Activated T-helper 1 cell treated with anti-CD3 and anti-CD28 coated beads, Interleukin-12 subunit alpha, Interleukin-12 subunit beta, Interleukin-2, Interleukin-4 antibody, amounts not matched to agents 30 ng/mL and 10 ng/mL and 1 ng/mL, durations not matched to agents 14 hours and 24 hours and 36 hours (primary cell): ENCODE measurements at regions of chr11 and their contacts with region 1.

Region 1: GRCh38 chr11:59668950-59669610 is at the start of gene PATL1:
- DNase-seq: peak; percentile 98
- H3K4me3 Mint-ChIP-seq: peak within 1 kb of the TSS; percentile 94
- H3K27ac Mint-ChIP-seq: peak within 1 kb of the TSS; percentile 97
- H3K4me1 Mint-ChIP-seq: peaks cover 46% of the 10 kb centered on the region
- H3K27me3 Mint-ChIP-seq: peaks cover 2% of the 10 kb centered on the region
- total RNA-seq, gene PATL1: 68.7 and 74.0 TPM in 2 replicates

Region 2: DNA sequence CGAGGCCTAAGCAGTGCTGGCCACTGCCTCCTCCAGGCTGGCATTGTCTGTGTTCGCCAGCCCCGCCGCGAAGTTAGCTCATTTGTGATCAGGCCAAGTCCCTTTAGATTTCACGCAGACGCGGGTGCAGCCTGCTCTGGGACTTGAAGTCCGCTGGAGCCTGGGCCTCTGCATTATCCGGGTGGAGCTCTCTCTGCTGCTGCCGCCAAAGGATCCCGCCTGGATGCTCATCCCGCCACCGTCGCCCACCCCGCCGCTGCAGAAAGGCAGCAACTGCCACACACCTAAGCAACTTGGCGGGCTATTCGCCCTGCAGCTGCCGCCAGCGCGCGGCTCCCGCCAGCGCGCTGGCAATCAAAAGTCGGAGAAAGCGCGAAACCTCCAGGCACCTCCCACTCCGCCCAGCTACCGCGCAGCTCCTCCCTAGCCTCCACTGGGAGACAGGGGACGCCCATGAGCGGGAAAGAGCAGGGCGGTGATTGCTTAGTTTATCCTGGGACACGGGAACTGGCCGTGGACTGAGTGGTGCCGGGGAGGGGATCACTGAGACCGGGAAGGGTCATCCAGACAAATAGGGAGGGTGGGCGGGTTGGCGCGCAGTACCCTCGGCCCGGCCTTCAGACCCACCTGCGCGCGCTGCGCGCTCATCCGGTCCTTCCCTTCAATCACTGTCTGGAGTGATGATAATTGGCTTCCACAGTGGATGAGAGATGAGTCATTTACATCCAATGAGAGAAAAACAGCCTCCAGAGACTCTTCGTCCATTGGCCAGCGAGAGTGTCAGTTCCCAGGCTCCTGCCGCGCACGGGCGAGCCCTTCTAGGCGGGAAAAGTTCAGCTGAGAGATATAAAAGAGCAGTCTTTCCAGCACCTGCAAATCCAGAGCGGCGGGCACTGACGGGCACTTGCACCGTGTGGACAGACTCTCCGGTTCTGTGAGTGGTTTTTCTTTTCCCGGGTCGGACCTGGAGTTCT is 562.4 kb before region 1 on chr11 and contains the start of gene FAM111B:
- intact Hi-C with region 1: loop called (anchors 2 kb)
- DNase-seq: peak; percentile 73
- H3K4me3 Mint-ChIP-seq: peak within 1 kb of the TSS; percentile 93
- H3K27ac Mint-ChIP-seq: peak within 1 kb of the TSS; percentile 82
- H3K4me1 Mint-ChIP-seq: peaks cover 80% of the 10 kb centered on the region
- H3K27me3 Mint-ChIP-seq: no peaks in the 10 kb centered on the region
- total RNA-seq, gene FAM111B: 54.9 and 57.3 TPM in 2 replicates

Region 3: DNA sequence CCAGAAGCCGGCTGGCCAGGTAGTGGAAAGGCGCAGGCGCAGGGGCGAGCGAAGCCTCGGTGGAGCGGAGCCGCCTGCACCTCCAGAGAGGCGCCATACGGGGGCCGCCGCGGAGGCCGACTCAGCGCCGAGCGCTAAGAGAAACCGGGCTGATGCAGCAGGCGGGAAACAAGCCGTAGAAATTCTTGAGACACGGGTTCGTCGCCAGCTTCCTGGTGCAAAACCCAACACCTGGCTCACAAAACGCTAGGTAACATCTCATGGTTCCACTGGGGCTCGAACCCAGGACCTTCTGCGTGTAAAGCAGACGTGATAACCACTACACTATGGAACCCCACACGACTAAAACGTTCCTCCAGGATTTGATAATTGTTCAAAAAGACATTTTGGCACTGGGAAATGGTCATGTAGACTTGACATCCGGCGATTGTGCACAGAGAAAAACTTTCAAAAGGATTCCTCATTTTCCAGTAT is 118.7 kb before region 1 on chr11:
- intact Hi-C with region 1: loop called (anchors 1 kb)
- DNase-seq: peak; percentile 82
- H3K4me3 Mint-ChIP-seq: peak overlapping the region; percentile 82
- H3K27ac Mint-ChIP-seq: peak overlapping the region; percentile 93
- H3K4me1 Mint-ChIP-seq: peaks cover 38% of the 10 kb centered on the region
- H3K27me3 Mint-ChIP-seq: peaks cover 19% of the 10 kb centered on the region

Region 4: DNA sequence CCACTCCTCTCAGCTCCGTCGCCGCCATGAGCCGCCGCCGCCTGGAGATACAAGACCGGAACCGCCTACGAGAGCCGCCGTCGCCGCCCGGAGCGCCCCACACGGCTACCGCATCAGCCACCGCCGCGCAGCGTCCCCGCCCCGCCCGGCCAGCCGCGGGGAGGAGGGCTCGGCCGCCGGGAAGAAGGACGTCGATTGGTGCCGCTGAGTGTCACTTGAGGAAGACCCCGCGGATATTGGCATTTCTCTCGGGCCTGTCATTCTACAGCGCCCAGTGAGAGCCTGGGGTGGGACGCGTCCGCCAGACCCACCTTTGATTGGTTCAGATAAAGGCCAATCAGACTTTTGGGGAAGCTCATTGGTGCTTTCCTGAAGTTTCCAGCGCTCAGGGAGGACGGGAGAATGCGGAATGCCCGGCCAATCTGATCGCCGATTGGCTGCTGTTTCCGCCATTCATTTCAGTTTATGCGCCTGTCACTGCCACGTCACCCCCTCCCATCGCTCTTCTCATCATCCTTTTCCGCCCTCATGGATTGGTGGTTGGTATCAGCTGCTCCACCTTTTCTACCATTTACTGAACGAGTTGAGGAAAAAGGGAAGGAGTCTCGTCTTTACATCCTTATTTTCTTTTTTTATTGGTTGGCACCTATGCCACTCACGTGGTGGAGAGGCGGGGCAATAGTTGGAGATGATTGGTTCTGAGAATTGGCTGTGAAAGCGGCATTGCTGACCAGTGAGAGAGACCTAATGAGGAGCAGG is 53.3 kb before region 1 on chr11 and contains the start of gene OSBP:
- intact Hi-C with region 1: loop called (anchors 1 kb)
- DNase-seq: peak; percentile 96
- H3K4me3 Mint-ChIP-seq: peak within 1 kb of the TSS; percentile 98
- H3K27ac Mint-ChIP-seq: peak within 1 kb of the TSS; percentile 96
- H3K4me1 Mint-ChIP-seq: peaks cover 37% of the 10 kb centered on the region
- H3K27me3 Mint-ChIP-seq: no peaks in the 10 kb centered on the region
- total RNA-seq, gene OSBP: 40.5 and 41.7 TPM in 2 replicates

Region 5: DNA sequence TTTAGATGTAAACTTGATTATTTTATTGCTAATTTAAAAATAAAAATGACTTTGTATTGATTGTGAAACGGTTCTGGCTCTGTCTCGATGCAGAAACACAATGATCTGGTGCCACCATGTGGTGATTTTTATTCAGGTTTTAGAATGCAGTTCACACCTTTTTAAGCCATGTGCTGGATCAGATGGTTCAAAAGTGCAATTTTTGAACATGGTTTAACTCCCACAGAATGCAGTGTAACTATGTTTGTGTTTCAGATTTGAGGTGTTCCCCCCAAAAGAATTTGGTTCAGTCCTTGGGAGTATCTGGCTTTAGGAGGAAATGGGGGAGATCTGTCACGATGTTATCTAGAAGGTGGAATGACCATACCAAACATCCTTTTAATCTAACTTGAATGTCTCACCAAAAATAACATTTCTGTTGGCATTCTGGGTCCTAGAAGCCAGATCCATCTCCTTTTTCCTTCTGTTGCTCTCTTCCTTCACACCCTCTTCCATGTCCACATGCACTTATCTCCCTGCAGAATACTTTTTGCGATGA is 133.6 kb after region 1 on chr11:
- intact Hi-C with region 1: loop called (anchors 2 kb)
- DNase-seq: peak; percentile 50
- H3K4me3 Mint-ChIP-seq: no peak overlapping the region
- H3K27ac Mint-ChIP-seq: no peak overlapping the region
- H3K4me1 Mint-ChIP-seq: peaks cover 24% of the 10 kb centered on the region
- H3K27me3 Mint-ChIP-seq: no peaks in the 10 kb centered on the region